ENCODE measurements at regions of chr17 and their contacts with region 1.

Region 1: DNA sequence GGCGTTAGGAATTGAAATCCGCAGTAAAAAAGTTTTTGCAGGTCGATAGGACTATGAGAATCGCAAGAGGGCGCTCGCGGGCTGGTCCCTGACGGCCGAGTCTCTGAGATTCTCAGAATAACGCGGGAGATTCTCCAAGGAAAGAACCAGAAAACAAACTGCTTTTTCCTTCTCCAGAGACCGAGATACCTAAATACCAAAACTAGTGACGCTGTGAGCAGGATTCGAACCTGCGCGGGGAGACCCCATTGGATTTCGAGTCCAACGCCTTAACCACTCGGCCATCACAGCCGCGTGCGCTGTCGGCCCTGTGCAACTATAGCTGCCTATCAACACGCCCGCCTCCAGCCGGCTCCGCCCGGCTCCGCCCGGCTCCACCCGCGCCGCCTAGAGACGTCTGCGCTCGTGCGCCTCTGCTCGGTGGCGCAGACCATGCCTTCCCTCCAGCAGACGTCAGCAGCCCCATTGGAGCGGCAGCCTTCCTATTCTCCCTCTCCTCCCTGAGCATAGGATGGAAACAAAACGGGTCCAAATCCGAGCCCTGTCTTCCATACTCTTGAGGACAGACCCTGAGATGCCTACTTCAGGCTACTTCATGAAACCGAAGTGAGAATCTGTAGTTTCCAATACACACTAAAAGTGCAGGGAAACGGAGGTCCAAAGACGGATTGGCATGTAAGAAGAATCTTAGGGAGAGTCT is 13.4 kb downstream of the PER1 start:
- DNase-seq: peak; percentile 95
- H3K4me3 Mint-ChIP-seq: no peak overlapping the region
- H3K27ac Mint-ChIP-seq: no peak overlapping the region
- H3K4me1 Mint-ChIP-seq: peaks cover 11% of the 10 kb centered on the region
- H3K27me3 Mint-ChIP-seq: no peaks in the 10 kb centered on the region
- CTCF ChIP-seq: peak; percentile 71

Region 2: DNA sequence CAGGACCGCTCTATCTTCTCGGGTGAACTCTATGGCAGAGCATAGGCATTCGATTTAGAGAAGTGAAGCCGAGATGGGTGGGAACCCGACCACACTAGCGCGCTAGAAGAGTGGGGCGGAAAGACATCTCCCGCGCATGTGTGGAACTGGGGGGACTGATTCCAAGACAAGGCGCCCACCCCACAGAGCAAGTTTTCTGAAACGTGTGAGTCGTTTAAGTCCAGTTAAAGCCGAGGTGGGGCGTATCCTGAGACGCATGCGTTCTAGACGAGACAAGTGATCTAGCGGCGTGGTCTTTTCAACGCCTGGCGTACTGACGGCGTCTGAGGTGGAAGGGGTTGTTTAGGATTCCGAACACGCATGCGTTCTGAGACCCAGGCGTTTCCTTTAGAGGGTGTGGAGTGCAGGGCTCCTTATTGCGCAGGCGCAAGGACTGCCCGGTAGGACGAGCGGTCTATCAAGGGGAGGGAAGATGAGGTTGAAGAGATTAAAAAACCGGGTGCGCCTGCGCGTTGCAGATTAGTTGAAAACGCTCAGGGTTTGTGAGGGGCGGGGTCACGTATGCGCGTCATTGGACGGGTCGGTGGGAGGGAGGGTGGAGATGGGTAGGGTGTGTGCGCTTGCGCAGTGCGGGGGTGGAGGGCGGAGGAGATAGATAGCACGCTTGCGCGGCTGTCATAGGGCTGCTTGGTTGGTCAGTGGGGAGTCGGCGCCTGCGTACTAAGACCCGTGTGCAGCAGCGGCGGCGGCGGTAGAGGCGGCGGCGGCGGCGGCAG is 831.7 kb before region 1 on chr17 and contains the start of gene EIF5A:
- CTCF ChIA-PET with region 1: no interaction called
- POLR2A ChIA-PET with region 1: no interaction called
- intact Hi-C with region 1: no loop called
- DNase-seq: peak; percentile 100
- H3K4me3 Mint-ChIP-seq: peak within 1 kb of the TSS; percentile 88
- H3K27ac Mint-ChIP-seq: peak within 1 kb of the TSS; percentile 90
- H3K4me1 Mint-ChIP-seq: peaks cover 24% of the 10 kb centered on the region
- H3K27me3 Mint-ChIP-seq: no peaks in the 10 kb centered on the region
- CTCF ChIP-seq: no peak
- total RNA-seq, gene EIF5A: 1,142 and 1,190 TPM in 2 replicates

Region 3: GRCh38 chr17:8041249-8041928 is 97.4 kb before region 1 on chr17:
- CTCF ChIA-PET with region 1: no interaction called
- POLR2A ChIA-PET with region 1: no interaction called
- intact Hi-C with region 1: no loop called
- DNase-seq: peak; percentile 91
- H3K4me3 Mint-ChIP-seq: peak overlapping the region; percentile 82
- H3K27ac Mint-ChIP-seq: peak overlapping the region; percentile 95
- H3K4me1 Mint-ChIP-seq: peaks cover 23% of the 10 kb centered on the region
- H3K27me3 Mint-ChIP-seq: no peaks in the 10 kb centered on the region
- CTCF ChIP-seq: peak; percentile 87

Region 4: DNA sequence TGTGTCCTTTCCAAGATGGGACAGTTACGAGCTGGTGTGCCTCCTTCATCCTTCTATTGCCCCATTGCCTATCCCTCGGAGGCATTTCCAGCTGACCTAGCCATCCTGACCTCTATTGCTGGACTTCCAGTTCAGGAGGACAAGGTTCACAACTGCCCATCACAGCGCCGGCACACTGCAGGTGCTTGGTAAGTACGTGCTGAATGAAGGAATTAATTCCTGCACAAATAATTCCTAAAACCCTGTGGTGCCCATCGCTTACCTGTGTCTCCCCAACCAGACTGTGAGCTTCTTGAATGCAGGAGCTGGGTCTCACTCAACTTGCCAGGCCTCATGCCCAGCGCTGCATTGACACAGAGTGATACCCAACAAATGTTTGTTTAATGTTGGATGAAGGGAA is 87.0 kb before region 1 on chr17:
- CTCF ChIA-PET with region 1: no interaction called
- POLR2A ChIA-PET with region 1: no interaction called
- intact Hi-C with region 1: no loop called
- DNase-seq: no peak
- H3K4me3 Mint-ChIP-seq: no peak overlapping the region
- H3K27ac Mint-ChIP-seq: no peak overlapping the region
- H3K4me1 Mint-ChIP-seq: peaks cover 19% of the 10 kb centered on the region
- H3K27me3 Mint-ChIP-seq: no peaks in the 10 kb centered on the region
- CTCF ChIP-seq: no peak

Region 5: GRCh38 chr17:8062807-8063483 is 75.9 kb before region 1 on chr17:
- CTCF ChIA-PET with region 1: interaction called, 10 read pairs
- POLR2A ChIA-PET with region 1: interaction called, 3 read pairs
- intact Hi-C with region 1: no loop called
- DNase-seq: no peak
- H3K4me3 Mint-ChIP-seq: no peak overlapping the region
- H3K27ac Mint-ChIP-seq: no peak overlapping the region
- H3K4me1 Mint-ChIP-seq: peaks cover 14% of the 10 kb centered on the region
- H3K27me3 Mint-ChIP-seq: peaks cover 17% of the 10 kb centered on the region
- CTCF ChIP-seq: no peak

Region 6: DNA sequence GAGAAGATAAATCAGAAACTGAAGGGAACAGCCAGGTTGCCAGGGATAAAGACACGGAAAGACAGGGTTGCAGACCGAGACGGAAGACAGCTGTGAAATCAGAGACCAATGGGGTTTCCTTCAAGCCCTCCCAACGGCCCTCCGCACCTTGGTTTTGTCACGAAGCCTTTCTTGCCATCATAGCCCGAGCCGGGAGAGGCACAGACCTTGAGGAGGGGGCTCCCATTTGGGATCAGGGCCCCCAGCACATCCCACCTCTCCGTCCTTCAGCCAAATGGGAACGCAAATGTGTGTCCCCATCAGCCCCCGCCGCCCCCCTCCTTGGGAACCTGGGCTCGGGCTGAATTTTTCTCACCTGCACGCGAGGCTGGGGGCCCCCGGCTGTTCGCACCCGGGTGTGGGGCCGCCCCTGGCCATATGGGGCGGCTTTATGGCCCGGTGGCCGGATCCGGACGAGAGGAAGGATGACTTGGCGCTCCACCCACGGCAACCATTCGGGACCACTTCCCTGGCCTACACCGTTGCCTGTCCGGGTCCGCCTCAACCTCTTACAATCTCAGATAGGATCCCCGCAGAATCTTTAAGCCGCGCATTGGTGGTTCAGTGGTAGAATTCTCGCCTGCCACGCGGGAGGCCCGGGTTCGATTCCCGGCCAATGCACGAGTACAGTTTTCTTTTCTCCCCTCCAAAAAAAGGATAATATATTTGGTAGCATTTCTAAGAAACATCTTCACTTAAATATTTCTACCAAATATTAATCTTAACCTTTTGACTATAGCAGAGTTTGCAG is 13.5 kb before region 1 on chr17:
- CTCF ChIA-PET with region 1: interaction called, 15 read pairs
- POLR2A ChIA-PET with region 1: interaction called, 37 read pairs
- intact Hi-C with region 1: no loop called
- DNase-seq: peak; percentile 75
- H3K4me3 Mint-ChIP-seq: peak overlapping the region; percentile 86
- H3K27ac Mint-ChIP-seq: peak overlapping the region; percentile 46
- H3K4me1 Mint-ChIP-seq: peaks cover 44% of the 10 kb centered on the region
- H3K27me3 Mint-ChIP-seq: no peaks in the 10 kb centered on the region
- CTCF ChIP-seq: no peak

Region 7: DNA sequence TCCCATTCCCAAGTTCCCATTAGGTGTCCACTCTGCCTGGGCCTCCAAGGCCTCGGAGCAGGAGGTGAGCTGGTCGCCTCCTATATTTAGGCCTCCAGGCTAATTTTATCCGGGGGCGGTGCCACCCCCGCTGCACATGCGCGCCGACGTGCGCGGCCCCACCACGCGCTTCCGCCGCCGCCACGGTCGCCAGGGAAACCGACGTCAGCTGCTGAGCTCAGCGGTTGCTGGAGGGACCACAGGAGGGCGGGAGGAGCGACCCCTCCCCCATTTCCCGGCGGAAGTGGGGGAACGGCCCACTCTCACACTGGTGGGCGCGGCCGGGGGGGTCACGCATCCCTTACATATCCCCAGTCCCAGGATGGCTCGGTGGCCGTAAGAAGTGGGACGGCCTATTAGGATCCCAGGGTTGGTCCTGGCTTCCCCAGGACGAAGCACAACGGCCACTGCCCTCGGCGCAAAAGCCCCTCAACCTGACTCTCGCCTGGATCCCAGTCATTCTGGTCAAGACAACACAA is 12.4 kb after region 1 on chr17:
- CTCF ChIA-PET with region 1: interaction called, 59 read pairs
- POLR2A ChIA-PET with region 1: interaction called, 429 read pairs
- intact Hi-C with region 1: loop called (anchors 1 kb)
- DNase-seq: peak; percentile 69
- H3K4me3 Mint-ChIP-seq: no peak overlapping the region
- H3K27ac Mint-ChIP-seq: no peak overlapping the region
- H3K4me1 Mint-ChIP-seq: peaks cover 33% of the 10 kb centered on the region
- H3K27me3 Mint-ChIP-seq: no peaks in the 10 kb centered on the region
- CTCF ChIP-seq: no peak

Region 8: GRCh38 chr17:8173056-8173870 is 34.4 kb after region 1 on chr17:
- CTCF ChIA-PET with region 1: interaction called, 5 read pairs
- POLR2A ChIA-PET with region 1: interaction called, 15 read pairs
- intact Hi-C with region 1: no loop called
- DNase-seq: peak; percentile 99
- H3K4me3 Mint-ChIP-seq: peak overlapping the region; percentile 91
- H3K27ac Mint-ChIP-seq: peak overlapping the region; percentile 100
- H3K4me1 Mint-ChIP-seq: peaks cover 27% of the 10 kb centered on the region
- H3K27me3 Mint-ChIP-seq: no peaks in the 10 kb centered on the region
- CTCF ChIP-seq: no peak

Region 9: GRCh38 chr17:8253800-8254199 is 115.0 kb after region 1 on chr17:
- CTCF ChIA-PET with region 1: no interaction called
- POLR2A ChIA-PET with region 1: no interaction called
- intact Hi-C with region 1: no loop called
- DNase-seq: no peak
- H3K4me3 Mint-ChIP-seq: no peak overlapping the region
- H3K27ac Mint-ChIP-seq: no peak overlapping the region
- H3K4me1 Mint-ChIP-seq: peaks cover 15% of the 10 kb centered on the region
- H3K27me3 Mint-ChIP-seq: no peaks in the 10 kb centered on the region
- CTCF ChIP-seq: no peak